ENCODE measurements at regions of chr11 and their contacts with region 1.

Region 1: DNA sequence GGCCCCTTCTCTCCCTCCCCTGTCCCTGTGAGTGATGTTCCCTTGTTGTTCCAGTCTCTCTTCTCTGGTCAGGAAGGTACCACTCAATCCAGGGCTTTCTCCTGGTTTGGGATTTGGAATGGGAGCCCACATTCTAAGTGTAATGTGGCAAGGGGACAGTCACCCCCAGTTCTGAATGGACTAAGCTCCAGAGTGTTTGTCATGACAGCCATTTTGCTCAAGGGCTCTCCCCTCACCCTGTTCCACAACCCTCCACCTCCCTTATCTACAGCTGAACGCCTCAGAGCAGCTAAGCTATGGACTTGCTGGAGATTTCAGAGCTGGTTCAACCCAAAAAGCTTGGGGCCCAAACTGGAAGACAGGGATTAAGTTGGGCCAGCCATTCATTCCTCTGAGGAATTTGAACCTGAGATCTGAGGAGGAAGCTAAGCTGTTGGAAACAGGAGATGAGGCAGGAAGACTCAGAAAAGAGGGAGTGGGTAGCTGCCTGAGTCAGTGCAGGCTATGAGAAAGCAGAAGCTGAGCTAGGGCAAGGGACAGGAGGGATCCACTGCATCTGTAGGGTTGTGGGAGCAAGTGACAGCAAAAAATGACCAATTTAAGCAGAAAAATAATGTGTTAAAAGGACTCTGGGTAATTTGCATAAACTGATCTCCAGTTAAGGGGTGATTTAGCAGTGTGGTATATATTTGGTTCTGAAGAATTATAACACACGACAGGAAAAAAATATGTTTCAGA is 22.9 kb upstream of the FCHSD2 start:
- DNase-seq: peak; percentile 26

Region 2: DNA sequence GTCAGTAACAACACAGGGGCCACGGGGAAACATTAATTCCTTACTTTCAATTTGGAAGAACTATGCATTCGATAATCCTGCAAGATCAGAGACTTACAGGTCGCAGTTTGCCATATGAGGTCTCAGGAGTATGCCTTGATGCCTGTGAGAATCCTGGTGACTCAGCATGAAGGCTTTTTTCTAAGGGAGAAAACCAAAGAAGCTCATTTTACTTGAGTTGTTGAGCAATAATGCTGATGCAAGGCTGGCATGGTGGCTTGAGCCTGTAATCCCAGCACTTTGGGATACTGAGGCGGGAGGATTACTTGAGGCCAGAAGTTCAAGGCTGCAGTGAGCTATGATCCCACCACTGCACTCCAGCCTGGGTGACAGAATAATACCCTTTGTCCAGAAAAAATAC is 324.2 kb before region 1 on chr11:
- intact Hi-C with region 1: loop called in 1 of 2 experiments (anchors 5 kb)
- DNase-seq: no peak

Region 3: DNA sequence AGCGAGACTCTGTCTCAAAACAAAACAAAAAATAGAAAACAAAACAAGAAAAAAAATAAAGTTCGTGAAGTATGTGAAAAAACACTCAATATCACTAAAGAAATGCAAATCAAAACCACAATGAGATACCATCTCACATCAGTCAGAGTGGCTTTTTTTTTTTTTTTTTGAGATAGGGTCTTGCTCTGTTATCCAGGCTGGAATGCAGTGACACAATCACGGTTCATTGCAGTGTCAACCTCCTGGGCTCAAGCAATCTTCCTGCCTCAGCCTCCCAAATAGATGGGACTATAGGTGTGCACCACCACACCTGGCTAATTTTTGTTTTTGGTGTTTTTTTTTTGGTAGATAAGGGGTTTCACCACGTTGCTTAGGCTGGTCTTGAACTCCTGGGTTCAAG is 313.2 kb before region 1 on chr11:
- intact Hi-C with region 1: loop called in 1 of 2 experiments (anchors 5 kb)
- DNase-seq: no peak

Measured in posterior vena cava (tissue), 2 donors.